ENCODE measurements at regions of chr4 and their contacts with region 1.

Region 1: GRCh38 chr4:8560267-8561047 is 19.7 kb upstream of the GPR78 start:
- DNase-seq: peak; percentile 55 to 94
- H3K4me3 ChIP-seq: peak overlapping the region; percentile 69
- H3K27ac ChIP-seq: peak overlapping the region; percentile 95
- H3K4me1 ChIP-seq: peaks cover 74% of the 10 kb centered on the region
- H3K27me3 ChIP-seq: no peaks in the 10 kb centered on the region
- CTCF ChIP-seq: no peak

Region 2: GRCh38 chr4:8571702-8572596 is 11.5 kb after region 1 on chr4:
- CTCF ChIA-PET with region 1: interaction called, 3 read pairs
- POLR2A ChIA-PET with region 1: no interaction called
- intact Hi-C with region 1: loop called (anchors 2 kb)
- DNase-seq: peak; percentile 77 to 81
- H3K4me3 ChIP-seq: no peak overlapping the region
- H3K27ac ChIP-seq: peak overlapping the region; percentile 52
- H3K4me1 ChIP-seq: peaks cover 49% of the 10 kb centered on the region
- H3K27me3 ChIP-seq: no peaks in the 10 kb centered on the region
- CTCF ChIP-seq: no peak

Region 3: DNA sequence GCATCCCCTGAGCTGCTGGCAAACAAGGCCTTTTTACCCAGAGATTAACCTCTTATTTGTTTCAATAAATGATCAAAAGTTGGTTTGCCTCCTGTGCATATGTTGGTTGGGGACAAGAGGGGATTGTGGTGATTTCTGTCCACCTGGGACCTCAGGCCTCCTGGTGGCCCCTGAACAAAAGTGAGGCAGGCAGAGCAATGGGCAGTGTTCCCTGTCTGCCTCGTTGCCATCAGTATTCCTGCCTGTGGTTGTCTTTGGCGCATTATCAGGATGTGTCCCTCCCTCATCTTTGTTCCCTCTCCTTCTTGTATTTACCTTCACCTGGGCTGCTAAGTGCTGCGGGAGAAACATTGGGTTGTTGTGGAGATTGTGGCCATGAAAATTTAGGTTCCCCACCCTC is 1155.6 kb after region 1 on chr4:
- CTCF ChIA-PET with region 1: no interaction called
- POLR2A ChIA-PET with region 1: no interaction called
- intact Hi-C with region 1: no loop called
- DNase-seq: no peak
- H3K4me3 ChIP-seq: no peak overlapping the region
- H3K27ac ChIP-seq: no peak overlapping the region
- H3K4me1 ChIP-seq: no peaks in the 10 kb centered on the region
- H3K27me3 ChIP-seq: peaks cover under 1% of the 10 kb centered on the region; the same call in 1 of the 2 replicates
- CTCF ChIP-seq: no peak

Measured in PC-9 (cell line).